HEK293T (cell line): ENCODE measurements at regions of chr18 and their contacts with region 1.

Region 1: DNA sequence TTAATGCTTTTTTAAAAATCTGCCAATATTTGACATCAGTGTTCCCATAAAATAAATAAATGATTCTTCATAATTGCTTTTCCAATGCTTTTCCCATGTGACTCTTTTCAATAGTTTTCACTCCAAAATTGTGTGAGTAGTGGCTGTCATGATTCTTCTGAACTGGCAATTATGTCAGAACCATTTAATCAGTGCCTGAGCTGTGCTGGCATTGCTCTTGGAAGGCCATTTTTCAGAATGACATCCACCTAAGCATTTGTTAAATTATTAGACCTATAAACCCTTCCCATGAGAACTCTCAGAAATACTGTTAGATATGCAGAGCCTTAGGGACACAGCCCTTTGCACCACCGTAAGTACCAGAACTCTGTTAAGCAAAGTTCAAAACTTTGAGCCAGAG is 334.9 kb upstream of the RAB12 start:
- DNase-seq: no peak

Region 2: DNA sequence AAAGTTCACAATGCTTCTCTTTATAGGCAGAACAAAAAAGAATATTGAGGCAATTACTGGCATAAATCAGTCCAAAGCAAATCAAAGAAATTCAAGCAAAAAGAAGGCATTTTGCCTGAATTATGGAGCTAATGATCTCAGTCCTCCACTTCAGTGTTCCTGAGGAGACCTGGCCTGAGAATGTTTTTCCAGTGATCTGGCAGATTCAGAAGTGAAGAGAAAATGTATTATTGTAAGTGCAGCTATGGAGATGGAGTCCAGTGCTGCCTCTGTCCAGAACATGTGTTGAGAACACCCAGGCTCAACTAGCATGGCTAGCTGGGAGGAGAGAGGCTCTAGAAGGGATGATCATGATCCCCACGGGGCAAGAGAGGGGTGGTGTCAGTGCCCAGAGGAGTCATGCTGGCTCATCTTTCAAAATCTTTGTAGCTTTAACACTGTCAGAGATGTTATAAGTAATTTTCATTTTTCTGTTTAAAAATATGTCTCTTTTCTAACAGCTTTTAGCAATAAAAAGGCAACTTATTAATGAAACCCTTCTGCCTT is 32.1 kb before region 1 on chr18:
- CTCF ChIA-PET with region 1: interaction called, 10 read pairs
- POLR2A ChIA-PET with region 1: no interaction called
- DNase-seq: no peak